ENCODE measurements at regions of chr19 and their contacts with region 1.

Region 1: DNA sequence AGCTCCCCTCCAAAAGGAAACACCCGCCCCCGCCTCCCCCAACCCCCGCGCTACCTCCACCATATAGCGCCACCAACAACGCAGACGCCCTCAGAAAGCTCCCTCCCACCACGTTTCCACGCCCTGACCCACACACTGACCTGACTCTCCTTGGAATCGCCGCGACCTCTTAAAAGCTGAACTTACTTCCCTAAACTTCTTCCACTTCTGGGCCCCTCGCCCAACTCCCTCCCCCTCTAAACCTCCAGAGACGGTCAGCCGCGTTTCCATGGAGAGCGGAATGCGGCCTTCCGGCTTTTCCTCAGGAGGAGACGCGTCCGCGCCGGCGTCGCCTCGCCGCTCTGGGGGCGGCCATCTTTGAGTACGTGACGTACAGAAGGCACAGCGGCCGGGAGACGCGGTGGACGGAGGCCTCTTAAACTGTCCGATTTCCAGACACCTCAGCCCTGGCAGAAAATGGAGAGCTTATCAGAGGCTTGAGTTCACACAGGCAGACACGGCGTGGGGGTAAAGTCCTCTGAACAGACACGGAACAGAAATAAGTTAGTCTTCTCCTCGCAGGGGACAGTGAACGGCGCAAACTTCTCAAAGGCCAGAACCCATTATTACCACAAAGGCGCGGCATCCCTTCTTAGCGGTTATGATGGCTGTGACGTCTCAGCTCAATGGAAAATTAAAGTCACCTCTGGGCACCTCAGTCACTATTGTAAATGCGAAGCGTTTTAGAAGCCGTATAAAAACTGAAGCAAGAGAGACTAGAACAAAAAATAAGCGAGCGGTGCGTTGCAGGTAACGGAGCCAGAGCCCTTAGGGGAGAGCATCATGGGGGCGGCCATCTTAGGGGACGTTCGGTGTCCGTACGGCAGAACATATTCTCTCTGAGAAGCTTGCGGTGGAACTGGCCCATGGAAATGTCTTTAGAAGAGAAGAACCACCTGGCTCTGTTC is at the start of gene ZNF432:
- DNase-seq: peak; percentile 93
- ATAC-seq: peak; percentile 87
- H3K4me3 ChIP-seq: peak within 1 kb of the TSS; percentile 70 to 99 (median 93)
- H3K4me3 Mint-ChIP-seq: peak within 1 kb of the TSS; percentile 98
- H3K27ac ChIP-seq: peak within 1 kb of the TSS; percentile 92 to 99
- H3K27ac Mint-ChIP-seq: peak within 1 kb of the TSS; percentile 100
- H3K4me1 ChIP-seq: peaks cover 9 to 10% of the 10 kb centered on the region in 2 donors
- H3K4me1 Mint-ChIP-seq: peaks cover 22% of the 10 kb centered on the region
- H3K27me3 ChIP-seq: no peaks in the 10 kb centered on the region
- H3K27me3 Mint-ChIP-seq: no peaks in the 10 kb centered on the region
- CTCF ChIP-seq: no peak
- total RNA-seq, gene ZNF432: 25.0 and 28.7 TPM in 2 replicates

Region 2: GRCh38 chr19:51926784-51927742 is 121.8 kb before region 1 on chr19 and contains the start of gene ZNF613:
- CTCF ChIA-PET with region 1: no interaction called
- POLR2A ChIA-PET with region 1: no interaction called
- intact Hi-C with region 1: loop called (anchors 1 kb)
- DNase-seq: peak; percentile 94
- ATAC-seq: peak; percentile 92
- H3K4me3 ChIP-seq: peak within 1 kb of the TSS; percentile 78 to 93 (median 86)
- H3K4me3 Mint-ChIP-seq: peak within 1 kb of the TSS; percentile 90
- H3K27ac ChIP-seq: peak within 1 kb of the TSS; percentile 72 to 76
- H3K27ac Mint-ChIP-seq: peak within 1 kb of the TSS; percentile 84
- H3K4me1 ChIP-seq: peaks cover 10 to 14% of the 10 kb centered on the region in 2 donors
- H3K4me1 Mint-ChIP-seq: peaks cover 22% of the 10 kb centered on the region
- H3K27me3 ChIP-seq: no peaks in the 10 kb centered on the region
- H3K27me3 Mint-ChIP-seq: no peaks in the 10 kb centered on the region
- CTCF ChIP-seq: peak; percentile 26
- total RNA-seq, gene ZNF613: 7.0 and 11.2 TPM in 2 replicates

Region 3: DNA sequence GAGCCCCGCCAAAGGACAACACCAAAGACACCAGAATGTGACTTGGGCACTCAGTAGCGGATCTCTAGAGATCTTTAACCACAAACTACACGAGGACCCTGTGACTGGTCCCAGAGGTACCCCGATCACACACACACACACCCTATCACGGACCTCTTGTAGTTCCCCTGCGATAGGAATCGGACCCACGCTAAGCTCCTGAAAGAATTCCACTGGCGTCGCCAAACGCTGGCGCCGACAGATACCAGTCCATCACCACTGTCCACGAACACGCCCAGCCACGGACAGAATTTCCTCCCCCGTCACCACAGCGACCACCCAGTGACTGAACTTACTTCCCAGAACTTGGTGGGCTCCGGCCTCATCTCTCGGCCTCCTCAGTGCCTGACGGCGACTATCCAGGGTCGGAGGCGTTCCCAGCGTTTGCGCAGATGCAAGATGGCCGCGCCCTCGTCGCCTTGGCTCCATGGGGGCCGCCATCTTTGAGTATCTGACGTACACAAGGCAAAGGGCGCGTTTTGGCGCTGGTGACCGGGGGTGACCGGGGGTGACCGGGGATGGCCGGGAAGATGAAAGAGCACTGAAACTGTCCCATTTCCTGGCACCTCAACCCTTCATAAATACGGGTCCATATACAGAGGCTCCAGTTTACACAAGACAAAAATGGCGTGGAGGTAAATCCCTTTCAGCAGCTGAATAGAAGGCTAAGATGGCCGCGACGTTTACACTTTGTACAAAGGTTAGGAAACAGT is 40.8 kb before region 1 on chr19 and contains the start of gene ZNF615:
- CTCF ChIA-PET with region 1: no interaction called
- POLR2A ChIA-PET with region 1: interaction called, 7 read pairs
- intact Hi-C with region 1: loop called (anchors 1 kb)
- DNase-seq: peak; percentile 94
- ATAC-seq: peak; percentile 94
- H3K4me3 ChIP-seq: peak within 1 kb of the TSS; percentile 68 to 90 (median 76)
- H3K4me3 Mint-ChIP-seq: peak within 1 kb of the TSS; percentile 92
- H3K27ac ChIP-seq: peak within 1 kb of the TSS; percentile 78 to 88
- H3K27ac Mint-ChIP-seq: peak within 1 kb of the TSS; percentile 98
- H3K4me1 ChIP-seq: peaks cover 9 to 12% of the 10 kb centered on the region in 2 donors
- H3K4me1 Mint-ChIP-seq: peaks cover 17% of the 10 kb centered on the region
- H3K27me3 ChIP-seq: no peaks in the 10 kb centered on the region
- H3K27me3 Mint-ChIP-seq: no peaks in the 10 kb centered on the region
- CTCF ChIP-seq: no peak
- total RNA-seq, gene ZNF615: 16.8 and 24.5 TPM in 2 replicates

Region 4: DNA sequence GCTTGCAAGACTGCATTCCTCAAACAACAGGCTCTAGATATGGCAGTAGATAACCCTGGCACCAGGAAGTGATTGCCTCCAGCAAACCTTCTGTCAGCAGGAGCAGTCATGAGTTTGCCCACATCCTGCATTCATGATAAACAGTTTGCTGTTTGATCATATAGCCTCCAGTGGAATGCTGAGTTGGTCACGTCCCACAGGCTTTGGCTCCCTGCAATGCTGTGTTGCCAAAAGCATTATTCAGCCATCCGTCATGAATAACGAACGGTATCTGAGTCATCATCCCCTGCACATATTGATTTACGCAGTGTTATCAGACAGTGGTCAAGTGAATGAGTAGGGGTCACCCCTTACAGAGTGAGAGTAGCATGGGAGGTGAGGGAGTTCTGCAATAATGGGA is 21.6 kb after region 1 on chr19:
- CTCF ChIA-PET with region 1: no interaction called
- POLR2A ChIA-PET with region 1: no interaction called
- intact Hi-C with region 1: no loop called
- DNase-seq: no peak
- ATAC-seq: no peak
- H3K4me3 ChIP-seq: no peak overlapping the region
- H3K4me3 Mint-ChIP-seq: no peak overlapping the region
- H3K27ac ChIP-seq: no peak overlapping the region
- H3K27ac Mint-ChIP-seq: no peak overlapping the region
- H3K4me1 ChIP-seq: no peaks in the 10 kb centered on the region
- H3K4me1 Mint-ChIP-seq: no peaks in the 10 kb centered on the region
- H3K27me3 ChIP-seq: no peaks in the 10 kb centered on the region
- H3K27me3 Mint-ChIP-seq: no peaks in the 10 kb centered on the region
- CTCF ChIP-seq: no peak

Region 5: GRCh38 chr19:52171321-52172169 is 122.7 kb after region 1 on chr19 and contains the start of gene ZNF836:
- CTCF ChIA-PET with region 1: no interaction called
- POLR2A ChIA-PET with region 1: no interaction called
- intact Hi-C with region 1: loop called (anchors 10 kb)
- DNase-seq: peak; percentile 92
- ATAC-seq: peak; percentile 98
- H3K4me3 ChIP-seq: peak within 1 kb of the TSS; percentile 71 to 100 (median 82)
- H3K4me3 Mint-ChIP-seq: peak within 1 kb of the TSS; percentile 98
- H3K27ac ChIP-seq: peak within 1 kb of the TSS; percentile 66 to 90
- H3K27ac Mint-ChIP-seq: peak within 1 kb of the TSS; percentile 97
- H3K4me1 ChIP-seq: peaks cover 17 to 20% of the 10 kb centered on the region in 2 donors
- H3K4me1 Mint-ChIP-seq: peaks cover 35% of the 10 kb centered on the region
- H3K27me3 ChIP-seq: no peaks in the 10 kb centered on the region
- H3K27me3 Mint-ChIP-seq: no peaks in the 10 kb centered on the region
- CTCF ChIP-seq: no peak
- total RNA-seq, gene ZNF836: 42.0 and 46.4 TPM in 2 replicates

Region 6: GRCh38 chr19:52296773-52297600 is 248.2 kb after region 1 on chr19 and contains the start of gene ZNF480:
- CTCF ChIA-PET with region 1: no interaction called
- POLR2A ChIA-PET with region 1: no interaction called
- intact Hi-C with region 1: loop called (anchors 1 kb)
- DNase-seq: peak; percentile 91
- ATAC-seq: peak; percentile 77
- H3K4me3 ChIP-seq: peak within 1 kb of the TSS; percentile 93 to 98 (median 98)
- H3K4me3 Mint-ChIP-seq: peak within 1 kb of the TSS; percentile 96
- H3K27ac ChIP-seq: peak within 1 kb of the TSS; percentile 94 to 96
- H3K27ac Mint-ChIP-seq: peak within 1 kb of the TSS; percentile 98
- H3K4me1 ChIP-seq: peaks cover 11 to 16% of the 10 kb centered on the region in 2 donors
- H3K4me1 Mint-ChIP-seq: peaks cover 21% of the 10 kb centered on the region
- H3K27me3 ChIP-seq: no peaks in the 10 kb centered on the region
- H3K27me3 Mint-ChIP-seq: no peaks in the 10 kb centered on the region
- CTCF ChIP-seq: no peak
- total RNA-seq, gene ZNF480: 21.8 and 24.8 TPM in 2 replicates